Natural killer cell (primary cell): ENCODE measurements at regions of chr16 and their contacts with region 1.

Region 1: GRCh38 chr16:76676356-76676755 is 399.2 kb downstream of the CNTNAP4 start:
- DNase-seq: no peak
- ATAC-seq: no peak
- H3K4me3 ChIP-seq: no peak overlapping the region
- H3K4me3 Mint-ChIP-seq: no peak overlapping the region
- H3K27ac ChIP-seq: no peak overlapping the region
- H3K27ac Mint-ChIP-seq: no peak overlapping the region
- H3K4me1 ChIP-seq: no peaks in the 10 kb centered on the region
- H3K4me1 Mint-ChIP-seq: no peaks in the 10 kb centered on the region
- H3K27me3 ChIP-seq: no peaks in the 10 kb centered on the region
- H3K27me3 Mint-ChIP-seq: no peaks in the 10 kb centered on the region
- CTCF ChIP-seq: no peak

Region 2: DNA sequence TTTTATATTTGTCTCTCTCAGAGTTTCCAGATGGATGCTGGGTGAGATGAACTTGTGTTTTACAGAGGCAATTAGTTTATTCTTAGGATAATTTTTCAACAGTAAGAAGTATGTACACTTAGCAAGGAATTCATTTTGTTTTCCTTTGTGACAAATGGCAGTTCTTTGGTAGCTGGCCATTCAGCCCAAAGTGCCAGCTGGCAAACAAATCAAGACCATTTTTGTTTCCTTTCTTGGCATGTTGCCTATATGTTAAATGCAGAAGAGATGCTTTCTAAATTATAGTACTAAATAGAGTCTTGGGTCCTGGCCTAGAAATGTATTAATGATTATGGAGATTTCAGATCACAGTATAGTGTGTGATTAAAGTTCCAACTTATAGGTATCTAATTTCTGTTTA is 62.1 kb before region 1 on chr16:
- intact Hi-C with region 1: loop called (anchors 10 kb)
- DNase-seq: no peak
- ATAC-seq: no peak
- H3K4me3 ChIP-seq: no peak overlapping the region
- H3K4me3 Mint-ChIP-seq: no peak overlapping the region
- H3K27ac ChIP-seq: no peak overlapping the region
- H3K27ac Mint-ChIP-seq: no peak overlapping the region
- H3K4me1 ChIP-seq: no peaks in the 10 kb centered on the region
- H3K4me1 Mint-ChIP-seq: no peaks in the 10 kb centered on the region
- H3K27me3 ChIP-seq: no peaks in the 10 kb centered on the region
- H3K27me3 Mint-ChIP-seq: no peaks in the 10 kb centered on the region
- CTCF ChIP-seq: no peak

Region 3: DNA sequence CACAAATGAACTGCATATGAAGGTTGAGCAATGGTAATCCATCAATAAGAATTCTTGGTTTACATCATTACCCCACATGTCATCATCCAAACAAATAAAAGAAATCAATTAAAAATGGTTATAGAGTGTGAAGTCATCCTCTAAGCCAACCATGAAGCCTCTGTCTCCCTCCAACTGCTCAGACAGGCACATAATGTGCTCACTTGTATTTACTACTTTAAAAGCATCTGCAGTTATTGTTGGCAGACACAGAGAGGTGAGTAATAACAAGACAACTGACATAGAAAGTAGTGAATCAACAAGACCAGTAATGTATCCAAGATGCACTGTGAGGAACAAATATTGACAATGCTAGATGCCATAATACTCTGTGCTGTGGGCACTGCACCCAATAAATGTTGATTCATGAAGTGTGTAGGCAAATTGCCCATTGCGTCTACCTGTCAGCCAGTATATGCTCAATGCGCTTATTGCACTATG is 738.4 kb after region 1 on chr16:
- intact Hi-C with region 1: no loop called
- DNase-seq: no peak
- ATAC-seq: no peak
- H3K4me3 ChIP-seq: no peak overlapping the region
- H3K4me3 Mint-ChIP-seq: no peak overlapping the region
- H3K27ac ChIP-seq: no peak overlapping the region
- H3K27ac Mint-ChIP-seq: no peak overlapping the region
- H3K4me1 ChIP-seq: no peaks in the 10 kb centered on the region
- H3K4me1 Mint-ChIP-seq: no peaks in the 10 kb centered on the region
- H3K27me3 ChIP-seq: no peaks in the 10 kb centered on the region
- H3K27me3 Mint-ChIP-seq: peaks cover 4 to 29% of the 10 kb centered on the region in 2 donors
- CTCF ChIP-seq: no peak